Activated B cell treated with CpG ODN at 0.5 μM for 24 hours (primary cell): ENCODE measurements at regions of chr1 and their contacts with region 1.

Region 1: GRCh38 chr1:193256019-193256418 is 69.6 kb upstream of the B3GALT2 start:
- DNase-seq: no peak
- ATAC-seq: no peak
- H3K4me3 Mint-ChIP-seq: no peak overlapping the region
- H3K27ac Mint-ChIP-seq: no peak overlapping the region
- H3K4me1 Mint-ChIP-seq: no peaks in the 10 kb centered on the region
- H3K27me3 Mint-ChIP-seq: no peaks in the 10 kb centered on the region
- CTCF ChIP-seq: no peak

Region 2: DNA sequence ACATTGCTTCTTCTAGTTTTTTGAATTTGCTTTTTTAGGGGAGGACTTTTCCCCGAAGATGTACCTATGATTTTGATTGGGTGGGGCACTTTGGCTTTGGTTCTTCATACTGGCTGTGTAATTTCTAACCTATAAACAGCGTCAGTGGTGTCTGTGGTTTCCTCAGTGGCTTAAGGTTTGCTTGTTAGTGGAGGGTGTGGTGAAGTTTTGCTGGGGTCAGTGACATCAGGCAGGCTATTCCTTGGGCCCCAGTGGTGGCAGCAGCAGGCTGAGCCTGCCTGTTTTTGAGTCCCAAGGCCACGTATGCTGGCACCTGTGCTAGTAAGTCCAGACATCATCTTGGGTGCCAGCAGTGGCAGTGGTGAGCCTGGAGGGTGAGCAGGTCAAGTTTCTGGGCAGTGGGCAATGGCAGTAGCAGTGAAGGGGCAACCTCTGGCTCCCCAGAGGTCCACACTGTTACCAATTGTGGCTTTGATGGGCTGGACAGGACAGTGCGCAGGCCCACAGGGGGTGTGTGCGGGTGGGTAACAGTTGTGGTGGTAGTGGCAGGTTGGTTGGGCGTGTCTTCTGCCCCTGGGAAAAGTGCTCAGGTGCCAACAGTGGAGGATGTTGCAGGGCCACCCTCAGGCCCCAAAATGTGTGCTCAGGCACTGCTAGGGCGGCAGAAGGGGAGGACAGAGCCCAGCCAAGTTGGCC is 14.7 kb before region 1 on chr1:
- CTCF ChIA-PET with region 1: no interaction called
- POLR2A ChIA-PET with region 1: no interaction called
- intact Hi-C with region 1: loop called (anchors 2 kb)
- DNase-seq: no peak
- ATAC-seq: no peak
- H3K4me3 Mint-ChIP-seq: no peak overlapping the region
- H3K27ac Mint-ChIP-seq: peak overlapping the region; percentile 1
- H3K4me1 Mint-ChIP-seq: peaks cover 4% of the 10 kb centered on the region
- H3K27me3 Mint-ChIP-seq: no peaks in the 10 kb centered on the region
- CTCF ChIP-seq: no peak

Region 3: DNA sequence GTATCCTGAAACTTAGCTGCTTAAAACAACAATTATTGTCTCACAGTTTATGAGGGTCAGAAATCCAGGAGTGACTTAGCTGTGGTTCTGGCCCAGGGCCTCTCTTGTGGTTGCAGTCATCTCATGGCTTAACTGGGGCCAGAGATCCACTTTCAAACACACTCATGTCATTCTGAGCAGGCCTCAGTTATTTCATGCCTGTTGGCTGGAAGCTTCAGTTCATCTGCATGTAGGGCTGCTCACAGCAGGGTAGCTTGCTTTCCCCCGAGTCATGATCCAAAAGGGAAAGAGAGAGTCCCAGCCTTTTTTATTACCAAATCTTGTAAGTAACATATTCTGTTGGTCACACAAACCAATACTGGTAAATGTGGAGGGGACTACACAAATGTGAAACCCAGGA is 27.0 kb after region 1 on chr1:
- CTCF ChIA-PET with region 1: no interaction called
- POLR2A ChIA-PET with region 1: no interaction called
- intact Hi-C with region 1: no loop called
- DNase-seq: no peak
- ATAC-seq: no peak
- H3K4me3 Mint-ChIP-seq: no peak overlapping the region
- H3K27ac Mint-ChIP-seq: no peak overlapping the region
- H3K4me1 Mint-ChIP-seq: no peaks in the 10 kb centered on the region
- H3K27me3 Mint-ChIP-seq: no peaks in the 10 kb centered on the region
- CTCF ChIP-seq: no peak

Region 4: GRCh38 chr1:193299038-193299437 is 43.0 kb after region 1 on chr1:
- CTCF ChIA-PET with region 1: no interaction called
- POLR2A ChIA-PET with region 1: no interaction called
- intact Hi-C with region 1: no loop called
- DNase-seq: no peak
- ATAC-seq: no peak
- H3K4me3 Mint-ChIP-seq: no peak overlapping the region
- H3K27ac Mint-ChIP-seq: no peak overlapping the region
- H3K4me1 Mint-ChIP-seq: no peaks in the 10 kb centered on the region
- H3K27me3 Mint-ChIP-seq: peaks cover 2% of the 10 kb centered on the region
- CTCF ChIP-seq: no peak